Activated naive CD8-positive, alpha-beta T cell treated with anti-CD3 and anti-CD28 coated beads, Interleukin-2, amount 10 ng/mL, durations not matched to agents 7 days and 5 days (primary cell): ENCODE measurements at regions of chr1 and their contacts with region 1.

Region 1: GRCh38 chr1:78004719-78005447 is at the start of gene DNAJB4:
- DNase-seq: no peak
- ATAC-seq: peak; percentile 99
- H3K4me3 Mint-ChIP-seq: peak within 1 kb of the TSS; percentile 95
- H3K27ac Mint-ChIP-seq: peak within 1 kb of the TSS; percentile 96
- H3K4me1 Mint-ChIP-seq: peaks cover 33% of the 10 kb centered on the region
- H3K27me3 Mint-ChIP-seq: no peaks in the 10 kb centered on the region
- total RNA-seq, gene DNAJB4: 15.2 to 16.4 TPM

Region 2: GRCh38 chr1:77683160-77684148 is 321.4 kb before region 1 on chr1:
- POLR2A ChIA-PET with region 1: interaction called, 16 read pairs
- DNase-seq: peak; percentile 95
- ATAC-seq: peak; percentile 75
- H3K4me3 Mint-ChIP-seq: peak overlapping the region; percentile 90
- H3K27ac Mint-ChIP-seq: peak overlapping the region; percentile 95
- H3K4me1 Mint-ChIP-seq: peaks cover 17% of the 10 kb centered on the region
- H3K27me3 Mint-ChIP-seq: no peaks in the 10 kb centered on the region

Region 3: GRCh38 chr1:77978969-77979876 is 25.7 kb before region 1 on chr1 and contains the start of gene FUBP1:
- POLR2A ChIA-PET with region 1: interaction called, 224 read pairs
- DNase-seq: peak; percentile 86
- ATAC-seq: peak; percentile 83
- H3K4me3 Mint-ChIP-seq: no peak within 1 kb of the TSS
- H3K27ac Mint-ChIP-seq: no peak within 1 kb of the TSS
- H3K4me1 Mint-ChIP-seq: peaks cover 35% of the 10 kb centered on the region
- H3K27me3 Mint-ChIP-seq: no peaks in the 10 kb centered on the region
- total RNA-seq, gene FUBP1: 223 to 228 TPM

Region 4: GRCh38 chr1:77994117-77994705 is 10.7 kb before region 1 on chr1:
- POLR2A ChIA-PET with region 1: interaction called, 26 read pairs
- DNase-seq: no peak
- ATAC-seq: no peak
- H3K4me3 Mint-ChIP-seq: no peak overlapping the region
- H3K27ac Mint-ChIP-seq: no peak overlapping the region
- H3K4me1 Mint-ChIP-seq: peaks cover 10% of the 10 kb centered on the region
- H3K27me3 Mint-ChIP-seq: no peaks in the 10 kb centered on the region

Region 5: GRCh38 chr1:78619803-78620579 is 615.1 kb after region 1 on chr1 and contains the start of gene IFI44L:
- POLR2A ChIA-PET with region 1: interaction called, 15 read pairs
- DNase-seq: peak; percentile 56
- ATAC-seq: peak; percentile 51
- H3K4me3 Mint-ChIP-seq: peak within 1 kb of the TSS; percentile 93
- H3K27ac Mint-ChIP-seq: peak within 1 kb of the TSS; percentile 95
- H3K4me1 Mint-ChIP-seq: peaks cover 38% of the 10 kb centered on the region
- H3K27me3 Mint-ChIP-seq: peaks cover 2% of the 10 kb centered on the region
- total RNA-seq, gene IFI44L: 278 to 290 TPM